ENCODE measurements at regions of chr18 and their contacts with region 1.

Region 1: GRCh38 chr18:50429207-50429948 is 54.5 kb downstream of the SKA1 start:
- DNase-seq: no peak
- ATAC-seq: no peak
- H3K4me3 Mint-ChIP-seq: no peak overlapping the region
- H3K27ac Mint-ChIP-seq: no peak overlapping the region
- H3K4me1 Mint-ChIP-seq: no peaks in the 10 kb centered on the region
- H3K27me3 Mint-ChIP-seq: peaks cover 13% of the 10 kb centered on the region
- CTCF ChIP-seq: peak; percentile 73

Region 2: DNA sequence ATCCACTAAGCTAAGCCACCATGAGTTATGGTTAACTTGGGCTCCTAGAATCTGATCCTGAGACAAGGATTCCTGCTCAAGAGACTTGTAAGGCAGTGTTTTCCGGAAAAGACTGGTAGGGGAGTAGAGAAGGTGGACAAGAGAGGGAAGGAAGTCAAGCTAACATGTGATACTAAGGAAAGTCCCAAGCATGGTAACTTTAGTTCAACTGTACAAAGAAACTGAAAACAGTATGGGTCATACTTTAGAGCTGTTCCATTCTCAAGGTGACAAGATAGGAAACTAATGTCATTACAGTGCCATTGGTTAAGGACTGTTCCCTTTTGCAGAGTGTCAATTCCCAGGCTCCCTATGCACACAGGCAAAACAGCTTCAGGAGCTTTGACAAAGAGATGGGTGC is 240.2 kb before region 1 on chr18:
- CTCF ChIA-PET with region 1: no interaction called
- POLR2A ChIA-PET with region 1: no interaction called
- intact Hi-C with region 1: no loop called
- DNase-seq: no peak
- ATAC-seq: no peak
- H3K4me3 Mint-ChIP-seq: no peak overlapping the region
- H3K27ac Mint-ChIP-seq: no peak overlapping the region
- H3K4me1 Mint-ChIP-seq: peaks cover 9% of the 10 kb centered on the region
- H3K27me3 Mint-ChIP-seq: peaks cover 46% of the 10 kb centered on the region
- CTCF ChIP-seq: no peak

Region 3: GRCh38 chr18:50410894-50411293 is 18.5 kb before region 1 on chr18:
- CTCF ChIA-PET with region 1: interaction called, 11 read pairs
- POLR2A ChIA-PET with region 1: no interaction called
- intact Hi-C with region 1: no loop called
- DNase-seq: no peak
- ATAC-seq: no peak
- H3K4me3 Mint-ChIP-seq: no peak overlapping the region
- H3K27ac Mint-ChIP-seq: no peak overlapping the region
- H3K4me1 Mint-ChIP-seq: no peaks in the 10 kb centered on the region
- H3K27me3 Mint-ChIP-seq: peaks cover 16% of the 10 kb centered on the region
- CTCF ChIP-seq: no peak

Region 4: DNA sequence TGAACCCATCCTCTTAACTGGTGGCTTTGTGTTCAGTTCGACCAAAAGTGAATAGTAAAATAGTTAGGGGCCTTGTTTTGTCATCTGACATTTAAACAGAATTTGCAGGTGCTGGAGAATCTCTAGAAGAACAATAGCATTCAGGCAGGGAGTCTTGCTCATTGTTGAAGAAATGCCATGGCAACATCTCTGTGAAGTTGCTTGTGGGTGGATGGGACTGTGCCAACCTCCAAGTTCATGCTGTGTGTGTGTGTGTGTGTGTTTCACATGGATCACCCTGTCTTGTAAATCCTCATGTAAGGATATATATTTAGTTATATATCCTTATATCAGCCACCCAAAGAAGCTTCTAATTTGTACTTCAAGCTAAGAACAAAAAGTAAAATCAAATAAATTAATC is 12.1 kb after region 1 on chr18:
- CTCF ChIA-PET with region 1: interaction called, 11 read pairs
- POLR2A ChIA-PET with region 1: no interaction called
- intact Hi-C with region 1: no loop called
- DNase-seq: no peak
- ATAC-seq: no peak
- H3K4me3 Mint-ChIP-seq: no peak overlapping the region
- H3K27ac Mint-ChIP-seq: no peak overlapping the region
- H3K4me1 Mint-ChIP-seq: no peaks in the 10 kb centered on the region
- H3K27me3 Mint-ChIP-seq: peaks cover 3% of the 10 kb centered on the region
- CTCF ChIP-seq: no peak

Region 5: DNA sequence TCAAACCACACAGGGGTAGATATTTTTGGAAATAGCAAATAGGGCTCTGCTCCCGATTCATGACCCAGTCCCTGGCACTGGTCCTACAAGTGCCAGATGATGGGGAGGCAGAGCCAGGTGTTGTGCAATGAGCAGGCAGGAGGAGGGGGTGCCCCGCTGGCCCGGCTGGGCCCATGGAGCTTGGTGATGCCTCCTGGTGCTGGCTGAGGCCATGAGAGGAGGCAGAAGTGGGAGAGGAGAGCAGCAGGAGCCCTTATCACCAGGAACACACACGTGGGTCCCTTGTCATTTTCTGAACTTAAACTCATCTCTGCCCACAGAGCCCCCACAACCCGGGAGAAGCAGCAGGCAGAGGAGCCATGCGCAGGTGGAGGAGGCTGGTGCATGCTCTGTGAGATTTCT is 40.0 kb after region 1 on chr18:
- CTCF ChIA-PET with region 1: no interaction called
- POLR2A ChIA-PET with region 1: no interaction called
- intact Hi-C with region 1: no loop called
- DNase-seq: no peak
- ATAC-seq: no peak
- H3K4me3 Mint-ChIP-seq: no peak overlapping the region
- H3K27ac Mint-ChIP-seq: no peak overlapping the region
- H3K4me1 Mint-ChIP-seq: no peaks in the 10 kb centered on the region
- H3K27me3 Mint-ChIP-seq: peaks cover 8% of the 10 kb centered on the region
- CTCF ChIP-seq: no peak

Region 6: DNA sequence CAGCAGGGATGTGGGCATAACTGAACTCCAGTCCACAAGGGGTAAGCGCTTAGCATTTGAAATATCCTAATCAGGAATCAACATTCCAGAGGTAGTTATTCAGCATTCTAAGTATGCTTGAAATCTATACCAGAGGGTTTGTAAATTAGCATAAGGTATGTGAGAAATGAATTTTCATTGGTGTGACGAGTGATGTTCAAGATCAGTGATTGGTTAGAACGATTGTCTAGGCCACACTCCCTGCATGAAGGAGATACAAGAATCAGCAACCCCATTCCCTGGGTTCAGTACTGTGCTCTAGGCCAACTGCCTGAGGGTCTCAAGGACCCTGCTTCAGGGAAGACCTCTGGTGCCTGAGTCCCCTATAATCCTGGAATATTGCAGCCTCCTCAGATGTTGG is 173.1 kb after region 1 on chr18:
- CTCF ChIA-PET with region 1: no interaction called
- POLR2A ChIA-PET with region 1: no interaction called
- intact Hi-C with region 1: no loop called
- DNase-seq: no peak
- ATAC-seq: no peak
- H3K4me3 Mint-ChIP-seq: no peak overlapping the region
- H3K27ac Mint-ChIP-seq: no peak overlapping the region
- H3K4me1 Mint-ChIP-seq: no peaks in the 10 kb centered on the region
- H3K27me3 Mint-ChIP-seq: peaks cover 5% of the 10 kb centered on the region
- CTCF ChIP-seq: no peak

Measured in activated CD8-positive, alpha-beta T cell treated with anti-CD3 and anti-CD28 coated beads for 36 hours (primary cell).